ENCODE measurements at regions of chr17 and their contacts with region 1.

Region 1: DNA sequence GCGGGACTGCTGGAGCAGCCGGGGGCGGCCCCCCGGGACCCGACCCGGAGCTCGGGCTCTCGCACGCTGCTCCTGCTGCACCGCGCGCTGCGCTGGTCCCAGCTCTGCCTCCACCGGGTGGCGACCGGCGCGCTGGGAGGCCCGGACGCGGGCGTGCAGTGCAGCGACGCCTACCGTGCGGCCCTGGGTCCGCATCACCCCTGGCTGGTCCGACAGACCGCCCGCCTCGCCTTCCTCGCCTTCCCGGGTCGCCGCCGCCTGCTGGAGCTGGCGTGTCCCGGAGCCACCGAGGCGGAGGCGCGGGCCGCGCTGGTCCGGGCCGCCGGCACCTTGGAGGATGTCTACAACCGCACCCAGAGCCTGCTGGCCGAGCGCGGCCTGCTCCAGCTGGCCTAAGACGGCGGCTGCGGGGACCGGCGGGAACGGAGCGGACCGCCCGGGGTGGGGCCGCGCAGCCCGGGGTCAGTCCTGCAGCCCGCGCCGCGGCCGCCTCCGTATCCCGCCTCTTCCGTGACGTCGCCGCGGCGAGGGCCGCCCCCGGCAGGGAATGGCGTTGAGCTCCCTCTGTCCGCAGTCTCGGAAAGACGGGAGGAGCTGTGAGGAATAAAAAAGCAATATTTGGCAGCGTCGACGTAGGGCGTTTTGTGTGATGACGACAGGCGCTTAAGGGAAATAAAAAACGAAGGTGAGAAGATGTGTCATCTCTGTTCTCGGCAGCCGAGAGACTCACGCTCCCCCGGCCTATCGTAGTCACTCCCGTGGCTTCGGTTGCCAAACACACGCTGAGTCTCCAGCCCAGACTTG is 1.3 kb downstream of the GLTPD2 start:
- DNase-seq: peak; percentile 81
- H3K4me3 ChIP-seq: peak overlapping the region; percentile 56 to 69
- H3K27ac ChIP-seq: peak overlapping the region; percentile 92 to 93
- H3K4me1 ChIP-seq: peaks cover 4% of the 10 kb centered on the region
- H3K27me3 ChIP-seq: no peaks in the 10 kb centered on the region
- CTCF ChIP-seq: peak; percentile 65 to 94 (median 86)
- POLR2A ChIP-seq: peak; percentile 76

Region 2: DNA sequence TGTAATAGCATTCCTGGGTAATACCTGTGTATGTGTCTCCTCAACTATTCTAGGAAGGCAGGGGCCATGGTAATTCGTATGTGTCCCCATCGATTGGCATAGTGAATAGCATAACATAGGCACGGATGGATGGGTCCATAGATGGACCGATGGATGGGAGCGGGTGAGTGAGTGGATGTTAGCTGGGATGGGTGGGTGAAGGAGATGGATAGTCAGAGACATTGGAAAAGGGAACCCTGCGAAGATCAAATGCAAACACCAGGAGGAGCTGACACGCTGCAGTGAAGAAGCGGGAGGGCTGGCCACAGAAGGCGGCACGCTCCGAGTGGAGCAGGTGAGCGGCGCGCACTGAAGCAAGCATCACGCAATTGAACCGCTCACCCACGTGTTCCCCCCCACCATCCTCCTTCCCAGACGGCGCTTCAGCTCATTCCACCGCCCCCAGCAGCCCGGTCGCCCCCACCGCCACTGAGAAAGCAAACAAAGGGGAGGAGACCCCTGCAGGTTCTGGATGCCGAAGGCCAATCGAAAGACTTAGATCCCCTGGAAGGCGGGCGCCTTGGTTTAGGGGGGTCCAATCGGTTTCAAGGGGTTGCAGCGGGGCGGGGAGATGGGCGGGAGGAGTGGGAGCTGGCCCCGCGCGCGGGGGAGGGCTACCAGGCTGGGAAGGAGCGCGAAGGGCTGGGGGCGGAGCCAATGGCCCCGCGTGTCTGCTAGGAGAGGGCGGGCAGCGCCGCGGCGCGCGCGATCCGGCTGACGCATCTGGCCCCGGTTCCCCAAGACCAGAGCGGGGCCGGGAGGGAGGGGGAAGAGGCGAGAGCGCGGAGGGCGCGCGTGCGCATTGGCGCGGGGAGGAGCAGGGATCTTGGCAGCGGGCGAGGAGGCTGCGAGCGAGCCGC is 80.1 kb before region 1 on chr17 and contains the start of gene ARRB2:
- intact Hi-C with region 1: loop called (anchors 2 kb)
- DNase-seq: peak; percentile 97
- H3K4me3 ChIP-seq: peak within 1 kb of the TSS; percentile 65 to 66
- H3K27ac ChIP-seq: peak within 1 kb of the TSS; percentile 87
- H3K4me1 ChIP-seq: peaks cover 5% of the 10 kb centered on the region
- H3K27me3 ChIP-seq: no peaks in the 10 kb centered on the region
- CTCF ChIP-seq: peak; percentile 26 to 90 (median 72)
- POLR2A ChIP-seq: peak; percentile 67
- total RNA-seq, gene ARRB2: 12.5 to 30.1 TPM

Region 3: GRCh38 chr17:4733073-4733531 is 57.0 kb before region 1 on chr17:
- intact Hi-C with region 1: loop called (anchors 5 kb)
- DNase-seq: no peak
- H3K4me3 ChIP-seq: no peak overlapping the region
- H3K27ac ChIP-seq: no peak overlapping the region
- H3K4me1 ChIP-seq: peaks cover 2% of the 10 kb centered on the region
- H3K27me3 ChIP-seq: no peaks in the 10 kb centered on the region
- CTCF ChIP-seq: peak in 1 of 4 experiments; percentile 18
- POLR2A ChIP-seq: no peak

Region 4: DNA sequence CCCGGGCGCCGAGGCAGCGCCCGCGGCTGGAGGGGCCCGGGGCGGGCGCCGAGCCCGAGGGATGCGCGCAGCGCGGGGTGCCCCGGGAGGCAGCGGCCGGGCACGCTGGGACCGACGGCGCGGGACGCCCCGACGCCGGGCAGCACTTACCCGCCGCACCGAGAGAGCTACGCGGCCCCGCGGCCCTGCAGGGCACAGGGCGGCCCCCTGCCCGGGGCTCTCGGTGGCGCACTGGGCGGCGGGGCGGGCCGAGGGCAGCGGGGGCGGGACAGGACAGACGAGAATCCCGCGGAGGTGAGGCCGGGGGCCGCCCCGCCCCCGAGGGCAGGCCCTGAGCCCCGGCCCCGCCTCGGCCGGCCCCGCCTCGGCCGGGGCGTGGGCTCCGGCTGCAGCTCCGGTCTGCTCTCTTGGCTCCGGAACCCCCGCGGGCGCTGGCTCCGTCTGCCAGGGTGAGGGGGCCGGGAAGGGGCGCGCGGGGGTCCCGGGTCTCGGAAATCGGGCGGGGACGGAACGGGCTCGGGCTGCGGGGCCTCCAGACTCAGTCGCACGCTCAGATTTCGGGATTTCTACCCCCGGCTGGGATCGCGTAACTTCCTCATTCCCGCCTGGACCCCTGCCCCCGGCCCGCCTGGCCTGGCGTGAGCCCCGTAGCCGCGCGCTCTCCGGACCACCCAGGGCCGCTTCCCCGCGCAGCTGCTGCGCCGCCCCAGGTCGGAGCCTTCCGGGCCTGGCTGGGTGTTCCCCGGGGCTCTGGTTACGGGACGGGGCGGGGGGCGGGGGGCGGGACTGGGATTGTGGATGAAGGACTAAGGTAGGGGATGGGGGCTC is 16.9 kb after region 1 on chr17 and contains the start of gene PLD2:
- intact Hi-C with region 1: loop called (anchors 1 kb)
- DNase-seq: peak; percentile 83
- H3K4me3 ChIP-seq: peak within 1 kb of the TSS; percentile 76 to 83
- H3K27ac ChIP-seq: peak within 1 kb of the TSS; percentile 79 to 83
- H3K4me1 ChIP-seq: peaks cover 4% of the 10 kb centered on the region
- H3K27me3 ChIP-seq: no peaks in the 10 kb centered on the region
- CTCF ChIP-seq: no peak
- POLR2A ChIP-seq: peak; percentile 80
- total RNA-seq, gene PLD2: 25.7 to 29.5 TPM

Region 5: GRCh38 chr17:4891411-4892342 is 101.6 kb after region 1 on chr17:
- intact Hi-C with region 1: loop called (anchors 5 kb)
- DNase-seq: no peak
- H3K4me3 ChIP-seq: no peak overlapping the region
- H3K27ac ChIP-seq: no peak overlapping the region
- H3K4me1 ChIP-seq: no peaks in the 10 kb centered on the region
- H3K27me3 ChIP-seq: no peaks in the 10 kb centered on the region
- CTCF ChIP-seq: no peak
- POLR2A ChIP-seq: no peak

Region 6: DNA sequence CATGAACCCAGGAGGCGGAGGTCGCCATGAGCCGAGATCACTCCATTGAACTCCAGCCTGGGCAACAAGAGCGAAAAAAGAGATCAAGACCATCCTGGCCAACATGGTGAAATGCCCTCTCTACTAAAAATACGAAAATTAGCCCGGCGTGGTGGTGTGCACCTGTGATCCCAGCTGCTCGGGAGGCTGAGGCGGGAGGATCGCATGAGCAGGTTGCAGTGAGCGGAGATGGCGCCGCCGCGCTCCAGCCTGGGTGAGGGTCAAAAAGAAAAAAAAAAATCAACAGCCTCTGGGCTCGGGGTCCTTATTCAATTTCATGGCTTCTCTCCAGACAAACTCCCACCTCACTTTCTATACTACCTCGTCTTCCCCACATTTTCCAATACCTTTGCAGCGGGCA is 138.8 kb after region 1 on chr17:
- intact Hi-C with region 1: no loop called
- DNase-seq: no peak
- H3K4me3 ChIP-seq: no peak overlapping the region
- H3K27ac ChIP-seq: no peak overlapping the region
- H3K4me1 ChIP-seq: no peaks in the 10 kb centered on the region
- H3K27me3 ChIP-seq: no peaks in the 10 kb centered on the region
- CTCF ChIP-seq: no peak
- POLR2A ChIP-seq: no peak

Measured in prostate gland (tissue), 2 donors.